Activated CD4-positive, alpha-beta T cell treated with anti-CD3 and anti-CD28 coated beads, Interleukin-2, amount 10 ng/mL, durations not matched to agents 24 days and 14 days (primary cell): ENCODE measurements at regions of chr4 and their contacts with region 1.

Region 1: GRCh38 chr4:173494013-173494970 is 35.7 kb downstream of the HAND2 start:
- DNase-seq: peak; percentile 90
- H3K4me3 Mint-ChIP-seq: peak overlapping the region; percentile 86
- H3K27ac Mint-ChIP-seq: no peak overlapping the region
- H3K4me1 Mint-ChIP-seq: peaks cover 30% of the 10 kb centered on the region
- H3K27me3 Mint-ChIP-seq: peaks cover 42% of the 10 kb centered on the region

Region 2: GRCh38 chr4:173318648-173319211 is 175.6 kb before region 1 on chr4:
- intact Hi-C with region 1: loop called (anchors 2 kb)
- DNase-seq: no peak
- H3K4me3 Mint-ChIP-seq: no peak overlapping the region
- H3K27ac Mint-ChIP-seq: no peak overlapping the region
- H3K4me1 Mint-ChIP-seq: peaks cover 9% of the 10 kb centered on the region
- H3K27me3 Mint-ChIP-seq: no peaks in the 10 kb centered on the region

Region 3: DNA sequence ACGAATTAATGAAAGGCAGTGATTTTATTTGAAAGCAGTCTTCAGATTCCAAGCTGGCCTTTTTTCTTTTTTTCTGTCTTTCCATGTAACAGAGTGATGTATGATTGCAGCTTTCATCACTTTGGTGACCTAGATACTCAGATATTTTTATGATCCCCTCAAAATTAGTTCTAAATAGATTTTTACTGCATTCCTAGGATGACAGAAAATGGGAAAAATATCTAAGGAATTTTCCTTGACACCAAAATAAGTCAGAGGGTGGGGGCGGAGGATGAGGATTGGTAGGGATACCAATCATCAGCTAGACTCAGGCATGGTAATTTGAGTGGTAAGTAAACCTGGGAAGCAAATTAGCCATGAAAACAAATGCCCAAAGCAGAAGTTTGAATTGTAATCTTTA is 148.2 kb before region 1 on chr4:
- intact Hi-C with region 1: no loop called
- DNase-seq: no peak
- H3K4me3 Mint-ChIP-seq: no peak overlapping the region
- H3K27ac Mint-ChIP-seq: no peak overlapping the region
- H3K4me1 Mint-ChIP-seq: peaks cover 2% of the 10 kb centered on the region
- H3K27me3 Mint-ChIP-seq: peaks cover 18% of the 10 kb centered on the region